ENCODE measurements at regions of chr9 and their contacts with region 1.

Region 1: GRCh38 chr9:128733256-128733655 is 9.3 kb upstream of the ZDHHC12 start:
- DNase-seq: peak; percentile 93
- ATAC-seq: peak; percentile 94
- H3K4me3 ChIP-seq: no peak overlapping the region
- H3K27ac ChIP-seq: peak overlapping the region; percentile 18
- H3K4me1 ChIP-seq: peaks cover 0 to 10% of the 10 kb centered on the region in 2 experiments; a peak in 1 of 4 replicates
- H3K27me3 ChIP-seq: no peaks in the 10 kb centered on the region
- CTCF ChIP-seq: peak in 2 of 3 experiments; percentile 90 to 92; a peak in 4 of 6 replicates
- POLR2A ChIP-seq: no peak
- RAD21 ChIP-seq: no peak

Region 2: DNA sequence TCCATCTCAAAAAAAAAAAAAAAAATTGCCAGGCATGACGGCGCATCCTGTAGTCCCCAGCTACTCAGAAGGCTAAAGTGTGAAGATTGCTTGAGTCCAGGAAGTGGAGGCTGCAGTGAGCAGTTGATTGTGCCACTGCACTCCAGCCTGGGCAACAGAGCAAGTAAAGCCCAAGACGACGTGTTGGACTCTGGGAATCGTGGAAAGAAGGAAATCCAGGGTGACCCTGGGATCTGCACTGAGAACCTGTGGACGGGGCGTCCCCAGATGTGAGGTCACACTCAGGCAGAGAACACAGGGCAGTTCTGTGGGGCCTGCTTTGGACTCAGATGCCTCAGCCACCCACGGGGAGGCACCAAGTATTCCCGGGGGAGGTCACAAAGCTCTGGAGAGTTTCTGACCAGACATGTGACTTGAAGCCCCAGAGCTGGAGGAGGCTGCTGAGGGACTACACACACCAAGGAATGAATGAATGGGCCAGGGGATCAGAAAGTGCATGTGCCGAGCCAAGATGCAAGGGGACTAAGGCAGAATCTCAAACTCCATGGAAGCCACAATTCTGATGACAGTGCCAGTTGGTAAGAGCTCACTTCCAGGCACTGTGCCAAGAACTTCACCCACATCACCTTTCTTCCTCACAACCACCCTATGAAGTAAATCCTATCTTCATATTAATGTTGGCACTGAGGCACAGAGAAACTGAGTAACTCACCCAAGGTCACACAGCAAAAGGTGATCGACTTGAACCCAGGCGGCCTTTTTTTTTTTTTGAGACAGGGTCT is 89.5 kb before region 1 on chr9:
- CTCF ChIA-PET with region 1: interaction called, 3 read pairs
- POLR2A ChIA-PET with region 1: no interaction called
- RAD21 ChIA-PET with region 1: no interaction called
- intact Hi-C with region 1: loop called (anchors 5 kb)
- DNase-seq: no peak
- ATAC-seq: 0 out of 2 replicates have a peak, but pooled peaks have one; percentile 16
- H3K4me3 ChIP-seq: no peak overlapping the region
- H3K27ac ChIP-seq: no peak overlapping the region
- H3K4me1 ChIP-seq: peaks cover 10 to 23% of the 10 kb centered on the region in 2 experiments; a peak in 3 of 4 replicates
- H3K27me3 ChIP-seq: no peaks in the 10 kb centered on the region
- CTCF ChIP-seq: no peak
- POLR2A ChIP-seq: no peak
- RAD21 ChIP-seq: no peak

Region 3: DNA sequence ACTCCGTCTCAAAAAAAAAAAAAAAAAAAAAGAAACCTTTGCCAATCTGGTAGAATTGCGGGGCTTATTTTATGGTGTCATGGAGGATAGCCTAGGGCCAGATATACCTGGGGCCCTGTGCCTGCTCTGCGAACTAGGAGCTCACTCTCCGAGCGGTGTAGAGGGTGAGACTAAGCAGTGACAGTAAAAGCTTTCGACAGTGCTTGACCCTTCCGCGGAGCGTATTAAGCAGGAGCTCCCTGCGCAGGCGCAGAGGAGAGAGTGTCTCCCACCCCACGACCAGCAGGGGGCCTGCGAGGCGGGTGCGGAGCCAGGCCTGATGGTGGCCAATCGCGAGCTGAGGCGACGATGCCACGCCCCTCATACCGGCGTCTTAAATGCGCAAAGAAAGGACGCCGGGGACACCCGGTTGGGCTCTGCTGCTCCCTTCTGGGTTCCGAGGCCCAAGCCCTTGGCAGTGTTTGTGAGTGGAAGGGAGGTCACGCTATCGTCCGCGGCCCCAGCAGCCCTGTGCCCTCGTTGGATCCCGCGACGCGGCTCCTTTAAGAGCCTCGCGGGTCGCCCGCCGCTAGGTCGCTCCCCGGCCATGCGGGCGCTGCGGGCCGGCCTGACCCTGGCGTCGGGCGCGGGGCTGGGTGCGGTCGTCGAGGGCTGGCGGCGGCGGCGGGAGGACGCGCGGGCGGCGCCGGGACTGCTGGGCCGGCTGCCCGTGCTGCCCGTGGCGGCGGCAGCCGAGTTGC is 85.0 kb after region 1 on chr9 and contains the start of gene ENDOG:
- CTCF ChIA-PET with region 1: interaction called, 12 read pairs
- POLR2A ChIA-PET with region 1: interaction called, 4 read pairs
- RAD21 ChIA-PET with region 1: interaction called in 1 of 2 experiments, 3 read pairs
- intact Hi-C with region 1: no loop called
- DNase-seq: peak; percentile 93
- ATAC-seq: peak; percentile 82
- H3K4me3 ChIP-seq: peak within 1 kb of the TSS; percentile 54 to 71
- H3K27ac ChIP-seq: peak within 1 kb of the TSS; percentile 85
- H3K4me1 ChIP-seq: peaks cover 12 to 23% of the 10 kb centered on the region in 2 experiments; a peak in 3 of 4 replicates
- H3K27me3 ChIP-seq: no peaks in the 10 kb centered on the region
- CTCF ChIP-seq: peak; percentile 46 to 92 (median 70); a peak in 5 of 6 replicates
- POLR2A ChIP-seq: peak; percentile 96
- RAD21 ChIP-seq: peak; percentile 28; the same call in 1 of the 2 replicates
- total RNA-seq, gene ENDOG: 27.2 TPM

Region 4: GRCh38 chr9:128881901-128882681 is 148.8 kb after region 1 on chr9 and contains the starts of genes KYAT1 and LRRC8A:
- CTCF ChIA-PET with region 1: interaction called, 3 read pairs
- POLR2A ChIA-PET with region 1: no interaction called
- RAD21 ChIA-PET with region 1: no interaction called
- intact Hi-C with region 1: loop called (anchors 5 kb)
- DNase-seq: peak; percentile 92
- ATAC-seq: peak; percentile 88
- H3K4me3 ChIP-seq: peak within 1 kb of the TSS; percentile 55 to 100
- H3K27ac ChIP-seq: peak within 1 kb of the TSS; percentile 76
- H3K4me1 ChIP-seq: peaks cover 7 to 25% of the 10 kb centered on the region in 2 experiments; a peak in 2 of 4 replicates
- H3K27me3 ChIP-seq: no peaks in the 10 kb centered on the region
- CTCF ChIP-seq: 0 out of 6 replicates have a peak, but pooled peaks of 1 of the 3 experiments have one; percentile 5
- POLR2A ChIP-seq: peak; percentile 75
- RAD21 ChIP-seq: no peak
- total RNA-seq, gene KYAT1: 10.1 TPM
- total RNA-seq, gene LRRC8A: 22.0 TPM

Measured in HCT116 (cell line).